IMR-90 (cell line): ENCODE measurements at regions of chr7 and their contacts with region 1.

Region 1: DNA sequence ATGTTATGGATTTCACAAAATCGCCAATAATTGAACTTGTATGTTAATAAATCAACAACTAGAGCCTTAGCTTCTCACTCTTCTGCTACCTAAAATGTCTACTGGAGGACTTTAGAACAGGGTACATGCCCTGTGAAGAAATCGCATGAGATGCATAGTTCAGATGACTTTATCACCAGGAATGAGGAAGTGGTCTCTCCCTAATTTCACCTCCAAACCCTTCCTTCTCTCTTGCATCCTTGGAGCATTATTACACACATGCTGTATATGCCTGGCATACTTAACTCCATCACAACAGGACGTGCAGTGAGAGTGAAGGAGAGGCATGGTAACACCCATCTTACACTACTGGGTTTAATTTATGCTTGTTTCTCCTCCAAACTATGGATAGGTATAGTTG is 27.8 kb downstream of the RHEB start:
- DNase-seq: peak; percentile 90
- ATAC-seq: peak; percentile 73
- H3K4me3 ChIP-seq: no peak overlapping the region
- H3K27ac ChIP-seq: no peak overlapping the region
- H3K4me1 ChIP-seq: peaks cover 13% of the 10 kb centered on the region
- H3K27me3 ChIP-seq: no peaks in the 10 kb centered on the region
- CTCF ChIP-seq: no peak
- POLR2A ChIP-seq: no peak
- RAD21 ChIP-seq: no peak

Region 2: GRCh38 chr7:151503902-151504714 is 12.2 kb after region 1 on chr7:
- CTCF ChIA-PET with region 1: interaction called, 4 read pairs
- POLR2A ChIA-PET with region 1: no interaction called
- dilution Hi-C with region 1: no loop called
- in situ Hi-C with region 1: no loop called
- intact Hi-C with region 1: loop called (anchors 2 kb)
- DNase-seq: peak; percentile 91
- ATAC-seq: peak; percentile 91
- H3K4me3 ChIP-seq: no peak overlapping the region
- H3K27ac ChIP-seq: peak overlapping the region; percentile 23; the same call in 1 of the 2 replicates
- H3K4me1 ChIP-seq: peaks cover 18% of the 10 kb centered on the region
- H3K27me3 ChIP-seq: no peaks in the 10 kb centered on the region
- CTCF ChIP-seq: no peak
- POLR2A ChIP-seq: no peak
- RAD21 ChIP-seq: no peak; the same call in 1 of the 2 replicates